Posterior cingulate gyrus (tissue), 11 donors: ENCODE measurements at regions of chr11 and their contacts with region 1.

Region 1: DNA sequence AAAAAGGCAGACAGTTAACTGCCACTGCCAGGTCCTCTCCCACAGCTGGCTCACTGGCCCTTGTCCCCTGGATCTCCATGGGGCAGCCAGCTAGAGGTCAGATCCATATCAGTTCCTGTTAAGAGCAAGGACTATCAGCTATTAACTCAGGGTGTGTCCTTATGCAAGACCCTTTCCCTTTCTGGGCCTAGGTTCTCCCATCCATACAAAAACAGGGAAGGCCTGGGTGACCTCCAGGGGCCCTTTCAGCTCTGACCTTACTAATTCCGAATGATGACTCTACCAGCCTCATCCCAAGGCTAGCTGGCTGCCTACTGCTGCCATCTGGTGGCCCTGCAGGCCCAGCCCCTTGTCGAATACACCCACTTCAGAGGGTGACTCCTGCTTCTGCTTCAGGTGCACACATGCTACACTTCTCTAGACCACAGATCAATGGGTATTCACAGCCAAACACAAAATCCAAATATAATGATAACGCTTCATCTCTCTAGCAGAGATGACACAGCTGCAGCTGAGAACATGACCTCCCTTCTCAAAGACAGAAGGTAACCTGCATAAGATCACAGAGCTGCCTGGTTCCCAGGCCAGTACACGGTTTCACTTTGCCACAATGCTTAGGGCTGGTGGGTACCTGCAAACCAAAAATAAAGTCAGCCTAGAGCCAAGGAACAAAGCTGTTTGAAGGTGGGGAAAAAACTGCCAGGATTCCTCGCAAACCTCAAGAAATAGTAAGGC is 34.1 kb downstream of the SERGEF start:
- DNase-seq: peak; percentile 46 to 95 (median 70)

Region 2: DNA sequence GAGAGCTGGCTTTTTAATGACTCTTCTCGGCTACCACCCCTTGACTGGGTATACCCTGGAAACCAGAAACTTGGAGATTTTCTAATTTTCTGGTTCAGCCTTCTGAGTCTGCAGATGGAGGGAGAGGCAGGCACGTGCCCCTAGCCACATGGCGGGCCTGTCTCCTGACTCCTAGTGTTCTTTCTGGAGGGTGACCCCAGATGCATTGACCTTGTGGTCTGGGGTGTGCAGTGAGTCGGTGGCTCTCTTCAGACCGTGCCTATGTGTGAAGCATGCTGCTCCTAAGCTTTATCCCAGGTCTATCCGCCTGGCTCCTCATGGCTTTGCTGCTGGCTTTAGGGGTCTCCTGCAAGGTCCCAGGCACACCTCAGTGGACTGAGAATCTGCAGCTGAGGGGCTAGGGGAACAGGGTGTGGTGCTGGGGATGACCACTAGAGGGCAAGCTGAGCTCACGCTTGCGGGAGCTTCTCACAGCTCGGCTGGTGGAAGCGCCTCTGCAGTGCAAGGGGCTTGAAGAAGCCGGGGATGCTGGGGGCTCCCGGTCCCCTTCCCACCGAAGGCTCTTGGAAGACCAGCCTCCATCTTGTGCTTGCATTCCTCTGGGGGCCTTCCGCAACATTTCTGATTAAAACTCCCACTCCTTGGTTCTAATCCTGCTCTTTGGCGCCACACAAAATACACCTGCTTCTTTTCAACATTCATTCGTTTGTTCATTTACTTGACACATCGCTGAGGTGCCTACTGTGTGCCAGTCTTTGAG is 379.8 kb before region 1 on chr11:
- intact Hi-C with region 1: loop called (anchors 1 kb)
- DNase-seq: peak; percentile 71 to 96 (median 86)

Region 3: DNA sequence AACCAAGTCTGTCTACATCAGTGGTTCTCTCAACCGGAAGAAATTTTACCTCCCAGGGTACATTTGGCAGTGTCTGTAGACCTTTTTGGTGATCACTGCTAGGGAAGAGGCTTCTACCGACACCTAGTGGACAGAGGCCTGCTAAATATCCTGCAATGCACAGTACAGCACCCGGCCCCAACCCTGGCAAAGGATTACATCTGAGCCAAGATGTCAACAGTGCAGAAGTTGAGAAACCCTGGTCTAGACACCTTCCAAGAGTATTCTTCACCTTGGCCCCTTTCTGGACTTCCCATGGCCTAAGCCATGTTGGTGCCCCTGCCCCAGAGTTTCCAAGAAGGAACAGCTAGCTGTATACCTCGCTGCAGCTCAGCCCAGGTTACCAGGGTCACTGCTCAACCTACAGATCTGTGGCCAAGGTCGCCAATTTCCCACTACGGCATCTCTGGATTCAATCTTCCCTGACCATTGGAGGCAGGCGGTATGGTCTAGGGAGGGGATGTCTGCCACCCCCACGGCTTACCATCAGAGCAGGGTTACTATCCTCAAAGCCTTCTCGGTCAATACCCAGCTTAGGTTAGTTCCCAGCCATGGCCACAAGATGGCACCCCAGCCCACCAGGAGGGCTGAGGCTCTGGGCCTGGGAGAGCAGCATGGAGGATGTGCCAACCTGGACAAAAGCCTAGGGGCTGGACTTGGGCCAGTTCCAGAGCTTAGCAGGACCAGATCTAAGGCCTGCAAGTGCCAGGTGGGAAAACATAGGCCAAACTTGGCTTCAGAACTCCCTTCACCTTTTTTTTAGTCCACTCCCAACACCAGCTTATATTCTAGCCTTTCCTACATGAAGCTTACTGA is 247.9 kb before region 1 on chr11:
- intact Hi-C with region 1: loop called (anchors 1 kb)
- DNase-seq: peak; percentile 78 to 98 (median 89)

Region 4: GRCh38 chr11:17827006-17827405 is 151.7 kb before region 1 on chr11:
- intact Hi-C with region 1: no loop called
- DNase-seq: no peak

Region 5: DNA sequence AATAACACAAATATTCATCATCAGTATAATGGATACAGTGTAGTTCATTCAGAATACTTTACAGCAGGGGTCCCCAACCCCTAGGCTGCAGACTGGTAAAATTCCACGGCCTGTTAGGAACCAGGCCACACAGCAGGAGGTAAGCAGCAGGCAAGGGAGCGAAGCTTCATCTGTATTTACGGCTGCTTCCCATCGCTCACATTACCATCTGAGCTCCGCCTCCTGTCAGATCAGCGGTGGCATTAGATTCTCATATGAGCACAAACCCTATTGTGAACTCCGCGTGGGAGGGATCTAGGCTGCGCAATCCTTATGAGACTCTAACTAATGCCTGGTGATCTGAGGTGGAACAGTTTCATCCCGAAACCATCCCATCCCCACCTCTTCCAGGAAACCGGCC is 90.9 kb before region 1 on chr11:
- intact Hi-C with region 1: loop called (anchors 5 kb)
- DNase-seq: no peak